ENCODE measurements at regions of chr3 and their contacts with region 1.

Region 1: DNA sequence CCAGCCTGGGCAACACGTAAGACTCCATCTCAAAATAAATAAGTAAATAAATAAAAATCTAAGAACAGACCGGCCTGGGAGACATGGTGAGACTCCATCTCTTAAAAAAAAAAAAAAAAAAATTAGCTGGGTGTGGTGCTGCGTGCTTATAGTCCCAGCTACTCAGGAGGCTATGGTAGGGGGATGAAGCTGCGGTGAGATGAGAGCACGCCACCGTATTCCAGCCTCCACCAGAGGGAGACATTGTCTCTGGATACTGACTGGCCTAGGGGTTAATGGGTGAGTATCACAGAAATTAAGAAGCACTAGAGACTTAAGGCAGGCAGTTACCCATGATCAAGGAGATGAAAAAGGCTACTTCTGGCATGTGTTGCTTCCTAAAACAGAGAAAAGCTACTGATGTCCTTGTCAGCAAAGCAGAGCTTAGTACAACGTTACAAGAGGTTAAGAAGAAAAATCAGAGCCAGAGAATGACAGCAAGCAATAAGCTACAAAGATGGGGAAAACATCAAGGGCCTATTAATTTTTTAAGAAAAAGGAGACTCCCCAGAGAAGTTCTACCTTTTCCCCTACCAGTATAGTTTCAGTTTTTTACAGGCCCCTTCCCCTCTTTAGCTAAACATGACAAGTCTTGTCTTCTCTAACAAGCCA is 8.6 kb downstream of the TFRC start:
- DNase-seq: peak in 41 of 42 donors; percentile 19 to 88 (median 67)

Region 2: GRCh38 chr3:196198771-196199753 is 125.7 kb after region 1 on chr3:
- intact Hi-C with region 1: loop called (anchors 5 kb)
- DNase-seq: peak in 1 of 42 donors; percentile 1